MCF 10A (cell line): ENCODE measurements at regions of chr11 and their contacts with region 1.

Region 1: DNA sequence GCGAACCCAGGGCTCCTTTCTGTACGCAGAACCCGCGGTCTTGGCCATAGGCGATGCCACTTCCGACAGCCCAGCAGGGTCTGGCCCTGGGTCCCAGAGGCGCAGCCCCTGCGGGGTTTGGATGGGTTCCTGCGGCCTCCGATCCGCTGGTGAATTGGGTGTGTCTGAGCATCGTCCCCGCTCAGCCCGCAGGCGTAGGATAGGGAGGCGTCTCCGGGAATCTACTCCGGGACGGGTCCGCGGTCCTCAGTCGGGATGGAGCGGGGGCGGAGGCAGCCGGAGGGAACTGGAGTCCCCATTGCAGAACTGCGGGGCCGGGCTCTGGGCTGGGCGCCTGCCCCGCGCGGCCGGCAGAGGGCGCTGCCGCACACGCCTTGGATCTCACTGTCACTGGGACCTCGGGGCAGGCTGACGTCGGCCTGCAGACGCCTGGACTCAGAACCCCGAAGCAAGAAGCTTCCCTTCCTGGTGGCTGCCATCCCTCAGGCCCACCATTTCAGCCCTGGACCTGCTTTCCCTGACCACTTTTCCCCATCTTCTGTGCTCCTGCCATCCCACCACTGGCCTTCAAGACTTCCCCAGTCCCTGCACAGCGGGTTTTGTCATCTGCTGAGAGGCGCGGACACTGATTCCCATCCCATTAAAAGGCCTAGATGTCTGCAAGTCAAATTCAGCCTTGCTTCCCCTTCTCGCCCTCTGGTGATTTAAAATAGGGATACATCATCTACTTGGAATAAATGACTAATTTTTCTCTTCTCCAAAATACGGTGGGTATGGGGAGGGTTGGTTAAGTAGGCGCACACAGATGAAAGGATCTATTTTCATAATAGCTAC is 38.3 kb upstream of the CREB3L1 start:
- DNase-seq: peak; percentile 89
- H3K4me3 Mint-ChIP-seq: peak overlapping the region; percentile 81
- H3K27ac Mint-ChIP-seq: peak overlapping the region; percentile 22
- H3K4me1 Mint-ChIP-seq: peaks cover 39% of the 10 kb centered on the region
- H3K27me3 Mint-ChIP-seq: no peaks in the 10 kb centered on the region
- CTCF ChIP-seq: peak; percentile 98

Region 2: DNA sequence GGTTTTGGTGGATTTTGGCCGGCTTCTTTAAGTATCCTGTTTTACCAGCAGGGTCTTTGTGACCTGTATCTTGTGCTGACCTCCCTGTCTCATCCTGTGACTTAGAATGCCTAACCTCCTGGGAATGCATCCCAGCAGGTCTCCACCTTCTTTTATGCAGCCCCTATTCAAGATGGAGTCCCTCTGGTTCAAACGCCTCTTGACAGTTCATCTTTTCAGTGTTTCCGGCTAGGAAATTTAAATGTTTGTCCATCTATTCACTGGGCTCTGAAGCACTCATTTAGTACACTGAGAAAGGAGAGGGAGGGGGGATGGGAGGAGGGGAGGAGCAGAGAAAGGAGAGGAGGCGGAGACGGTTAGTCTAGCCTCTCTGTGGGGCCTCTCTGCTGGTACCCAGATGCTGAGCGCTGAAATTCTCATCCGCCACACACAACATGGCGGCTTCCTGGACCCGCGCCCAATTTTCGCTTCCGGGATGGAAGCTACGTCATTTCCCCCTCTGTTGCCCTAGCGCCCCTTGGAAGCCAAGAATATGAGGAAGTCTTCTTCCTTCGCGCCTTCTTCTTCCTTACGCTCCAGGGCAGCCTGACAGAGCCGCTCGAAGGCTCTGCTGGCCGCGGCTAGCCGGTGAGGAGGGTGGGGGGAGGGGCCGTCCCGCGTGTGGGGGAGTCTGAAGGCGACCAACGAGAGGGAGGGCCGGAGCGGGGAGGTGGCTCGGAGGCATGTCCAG is 884.0 kb before region 1 on chr11:
- CTCF ChIA-PET with region 1: no interaction called
- POLR2A ChIA-PET with region 1: no interaction called
- intact Hi-C with region 1: no loop called
- DNase-seq: no peak
- H3K4me3 Mint-ChIP-seq: no peak overlapping the region
- H3K27ac Mint-ChIP-seq: no peak overlapping the region
- H3K4me1 Mint-ChIP-seq: no peaks in the 10 kb centered on the region
- H3K27me3 Mint-ChIP-seq: peaks cover 78% of the 10 kb centered on the region
- CTCF ChIP-seq: no peak

Region 3: DNA sequence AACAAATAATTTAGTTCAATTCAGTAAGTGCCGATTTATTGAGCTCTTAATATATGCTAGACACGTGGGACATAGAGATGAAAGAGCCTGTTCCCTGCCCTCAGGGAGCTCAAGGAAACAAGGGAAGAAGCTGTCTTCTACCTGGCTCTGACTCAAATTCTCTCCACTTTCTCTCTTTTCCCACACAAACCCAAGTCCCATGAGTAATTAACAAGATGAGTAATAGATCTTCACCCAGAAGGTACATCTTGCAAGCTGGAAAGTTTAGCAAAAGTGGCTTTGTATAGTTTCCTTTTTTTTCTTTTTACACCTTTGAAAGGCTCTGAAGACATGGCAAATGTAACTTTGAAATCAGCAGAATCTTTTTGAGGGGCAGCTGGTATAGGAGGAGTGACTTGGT is 525.6 kb before region 1 on chr11:
- CTCF ChIA-PET with region 1: no interaction called
- POLR2A ChIA-PET with region 1: no interaction called
- intact Hi-C with region 1: no loop called
- DNase-seq: peak; percentile 38
- H3K4me3 Mint-ChIP-seq: no peak overlapping the region
- H3K27ac Mint-ChIP-seq: no peak overlapping the region
- H3K4me1 Mint-ChIP-seq: peaks cover 3% of the 10 kb centered on the region
- H3K27me3 Mint-ChIP-seq: peaks cover 39% of the 10 kb centered on the region
- CTCF ChIP-seq: no peak

Region 4: GRCh38 chr11:46114961-46115360 is 124.2 kb before region 1 on chr11:
- CTCF ChIA-PET with region 1: interaction called, 6 read pairs
- POLR2A ChIA-PET with region 1: interaction called, 18 read pairs
- intact Hi-C with region 1: no loop called
- DNase-seq: no peak
- H3K4me3 Mint-ChIP-seq: no peak overlapping the region
- H3K27ac Mint-ChIP-seq: no peak overlapping the region
- H3K4me1 Mint-ChIP-seq: peaks cover 28% of the 10 kb centered on the region
- H3K27me3 Mint-ChIP-seq: no peaks in the 10 kb centered on the region
- CTCF ChIP-seq: no peak

Region 5: GRCh38 chr11:46127150-46127638 is 112.0 kb before region 1 on chr11:
- CTCF ChIA-PET with region 1: interaction called, 8 read pairs
- POLR2A ChIA-PET with region 1: interaction called, 28 read pairs
- intact Hi-C with region 1: loop called (anchors 1 kb)
- DNase-seq: peak; percentile 94
- H3K4me3 Mint-ChIP-seq: no peak overlapping the region
- H3K27ac Mint-ChIP-seq: no peak overlapping the region
- H3K4me1 Mint-ChIP-seq: peaks cover 8% of the 10 kb centered on the region
- H3K27me3 Mint-ChIP-seq: no peaks in the 10 kb centered on the region
- CTCF ChIP-seq: peak; percentile 50

Region 6: DNA sequence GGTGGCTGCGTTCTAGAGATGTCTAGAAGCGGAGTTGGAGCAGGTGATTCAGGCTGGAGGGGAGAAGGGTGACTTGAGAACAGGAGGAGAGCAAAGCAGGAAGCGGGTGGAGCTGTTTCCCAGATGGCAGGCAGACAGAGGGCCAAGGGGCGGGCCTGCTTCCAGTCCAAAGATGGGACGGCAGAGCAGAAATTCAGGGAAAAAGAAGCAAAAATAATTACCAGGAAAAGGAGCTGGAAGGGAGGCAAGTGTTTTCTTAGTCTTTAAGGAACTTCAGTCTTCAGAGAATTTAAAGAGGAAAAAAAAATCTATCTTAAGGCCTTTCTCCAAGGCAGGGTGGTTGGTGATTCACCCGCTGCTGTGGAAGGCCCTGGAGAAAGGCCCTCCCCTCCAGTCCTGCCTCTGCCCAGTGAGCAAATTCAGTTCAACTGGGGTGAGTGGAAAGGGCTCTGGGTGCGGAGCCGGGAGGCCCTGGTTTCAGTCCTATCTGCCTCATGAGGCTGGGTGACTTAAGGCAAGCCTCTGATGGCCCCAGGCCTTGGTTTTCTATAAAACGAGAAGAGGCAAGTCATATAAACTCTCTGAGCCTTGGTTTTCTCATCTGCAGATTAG is 33.7 kb after region 1 on chr11:
- CTCF ChIA-PET with region 1: interaction called, 6 read pairs
- POLR2A ChIA-PET with region 1: interaction called, 12 read pairs
- intact Hi-C with region 1: no loop called
- DNase-seq: peak; percentile 44
- H3K4me3 Mint-ChIP-seq: no peak overlapping the region
- H3K27ac Mint-ChIP-seq: peak overlapping the region; percentile 75
- H3K4me1 Mint-ChIP-seq: peaks cover 14% of the 10 kb centered on the region
- H3K27me3 Mint-ChIP-seq: no peaks in the 10 kb centered on the region
- CTCF ChIP-seq: no peak

Region 7: GRCh38 chr11:46308631-46309419 is 69.6 kb after region 1 on chr11:
- CTCF ChIA-PET with region 1: interaction called, 374 read pairs
- POLR2A ChIA-PET with region 1: interaction called, 33 read pairs
- intact Hi-C with region 1: loop called (anchors 1 kb)
- DNase-seq: peak; percentile 68
- H3K4me3 Mint-ChIP-seq: no peak overlapping the region
- H3K27ac Mint-ChIP-seq: no peak overlapping the region
- H3K4me1 Mint-ChIP-seq: peaks cover 17% of the 10 kb centered on the region
- H3K27me3 Mint-ChIP-seq: no peaks in the 10 kb centered on the region
- CTCF ChIP-seq: peak; percentile 86